Lower leg skin (tissue), 4 donors: ENCODE measurements at regions of chr18 and their contacts with region 1.

Region 1: GRCh38 chr18:4720518-4720917 is 265.4 kb upstream of the DLGAP1 start:
- DNase-seq: no peak
- H3K4me3 ChIP-seq: no peak overlapping the region
- CTCF ChIP-seq: no peak
- POLR2A ChIP-seq: no peak

Region 2: DNA sequence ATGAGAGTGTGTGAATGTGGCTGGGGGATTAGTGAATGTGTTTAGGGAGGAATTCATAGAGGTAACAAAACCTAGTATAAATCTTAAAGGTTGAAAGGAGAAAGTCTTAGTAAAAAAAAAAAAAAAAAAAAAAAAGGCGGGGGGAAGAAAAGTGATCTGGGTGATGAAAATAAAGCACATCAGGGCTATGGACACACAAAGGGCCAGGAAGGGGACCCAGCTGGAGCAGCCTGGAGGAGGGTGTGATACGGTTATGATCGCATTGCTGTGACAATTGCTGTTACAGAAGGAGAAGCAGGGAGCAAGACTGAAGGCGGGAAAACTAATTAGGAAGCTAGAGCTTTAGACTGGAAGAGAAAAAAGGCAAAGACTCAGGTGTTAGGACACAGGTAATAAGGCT is 350.8 kb before region 1 on chr18:
- intact Hi-C with region 1: loop called (anchors 5 kb)
- DNase-seq: no peak
- H3K4me3 ChIP-seq: no peak overlapping the region
- CTCF ChIP-seq: no peak
- POLR2A ChIP-seq: no peak